ENCODE measurements at regions of chr6 and their contacts with region 1.

Region 1: GRCh38 chr6:38493931-38494547 is 145.7 kb downstream of the BTBD9 start:
- DNase-seq: peak; percentile 72
- H3K4me3 ChIP-seq: no peak overlapping the region
- H3K27ac ChIP-seq: no peak overlapping the region
- H3K4me1 ChIP-seq: no peaks in the 10 kb centered on the region
- H3K27me3 ChIP-seq: no peaks in the 10 kb centered on the region
- CTCF ChIP-seq: peak; percentile 87 to 97 (median 90)
- POLR2A ChIP-seq: no peak

Region 2: GRCh38 chr6:37705239-37706051 is 788.6 kb before region 1 on chr6:
- intact Hi-C with region 1: loop called (anchors 5 kb)
- DNase-seq: peak; percentile 60
- H3K4me3 ChIP-seq: peak overlapping the region; percentile 39 to 43
- H3K27ac ChIP-seq: peak overlapping the region; percentile 70
- H3K4me1 ChIP-seq: peaks cover 4% of the 10 kb centered on the region
- H3K27me3 ChIP-seq: no peaks in the 10 kb centered on the region
- CTCF ChIP-seq: peak; percentile 24 to 71 (median 65)
- POLR2A ChIP-seq: no peak

Region 3: DNA sequence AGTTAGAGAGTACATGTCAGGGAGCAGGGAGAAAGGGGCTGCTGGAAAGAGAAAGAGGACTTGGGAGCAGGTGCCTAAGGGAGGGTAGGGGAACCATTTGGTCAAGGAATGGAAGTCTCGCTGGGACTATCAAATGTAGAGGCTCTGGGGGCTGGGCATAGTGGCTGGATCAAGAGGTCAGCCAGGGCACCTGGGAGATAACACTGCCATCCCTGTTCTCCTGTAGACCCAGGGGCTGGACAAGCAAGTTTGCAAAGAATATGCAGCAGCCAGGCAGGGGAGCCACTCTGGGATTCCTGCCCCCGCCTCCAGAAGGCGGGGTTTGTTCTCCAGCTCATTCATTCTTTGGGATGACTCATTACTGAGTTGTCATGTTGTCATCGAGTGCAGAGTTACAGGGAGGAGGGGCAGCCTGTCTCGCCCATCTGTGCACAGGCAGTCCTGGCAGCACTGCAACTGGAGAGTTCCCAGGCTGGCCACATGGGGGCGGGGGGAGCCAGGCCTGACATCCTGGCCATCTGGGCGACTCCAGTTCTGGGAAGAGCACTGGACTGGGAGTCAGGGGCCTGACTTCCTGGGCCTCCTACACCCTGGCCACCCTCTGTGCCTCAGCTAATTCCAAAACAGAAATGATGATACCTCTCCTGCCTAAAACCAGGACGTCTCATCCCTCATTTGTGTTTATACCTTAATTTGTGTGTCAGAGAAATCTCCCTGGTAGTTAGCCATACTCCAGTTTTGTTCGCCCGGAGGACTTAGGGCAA is 702.7 kb before region 1 on chr6:
- intact Hi-C with region 1: loop called (anchors 5 kb)
- DNase-seq: peak; percentile 90
- H3K4me3 ChIP-seq: no peak overlapping the region
- H3K27ac ChIP-seq: no peak overlapping the region
- H3K4me1 ChIP-seq: no peaks in the 10 kb centered on the region
- H3K27me3 ChIP-seq: no peaks in the 10 kb centered on the region
- CTCF ChIP-seq: peak; percentile 76 to 96 (median 87)
- POLR2A ChIP-seq: no peak

Region 4: DNA sequence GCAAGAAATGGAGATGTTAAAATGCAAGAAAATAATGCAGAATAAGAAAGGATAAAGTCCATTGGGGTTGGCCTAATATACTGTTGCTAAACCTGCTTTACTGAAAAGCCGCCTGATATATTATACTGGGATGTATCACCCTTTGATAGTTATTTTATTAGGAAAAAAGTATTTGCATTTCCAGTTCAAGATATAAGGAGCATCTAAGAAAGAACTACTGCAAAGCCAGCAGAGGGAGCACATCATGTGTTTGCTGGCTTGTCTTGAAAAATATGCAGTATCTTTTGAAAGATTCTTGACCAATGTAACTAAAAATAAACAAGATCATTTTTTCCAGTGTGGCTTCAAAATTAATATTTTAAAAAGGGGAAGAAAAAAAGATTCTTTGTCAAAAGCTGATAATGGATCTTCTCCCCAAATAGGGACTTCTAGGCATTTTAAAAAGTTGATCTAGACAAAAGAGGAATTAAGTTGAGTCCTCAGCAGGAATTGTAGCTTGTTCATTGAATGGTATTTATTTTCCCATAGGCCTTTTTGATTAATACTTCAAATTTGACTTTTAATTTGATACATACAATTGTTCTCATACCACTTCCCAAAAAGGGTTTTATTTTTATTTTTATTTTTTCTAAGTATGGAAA is 459.6 kb before region 1 on chr6:
- intact Hi-C with region 1: loop called (anchors 5 kb)
- DNase-seq: no peak
- H3K4me3 ChIP-seq: no peak overlapping the region
- H3K27ac ChIP-seq: no peak overlapping the region
- H3K4me1 ChIP-seq: no peaks in the 10 kb centered on the region
- H3K27me3 ChIP-seq: no peaks in the 10 kb centered on the region
- CTCF ChIP-seq: peak; percentile 11 to 62 (median 44)
- POLR2A ChIP-seq: no peak

Region 5: DNA sequence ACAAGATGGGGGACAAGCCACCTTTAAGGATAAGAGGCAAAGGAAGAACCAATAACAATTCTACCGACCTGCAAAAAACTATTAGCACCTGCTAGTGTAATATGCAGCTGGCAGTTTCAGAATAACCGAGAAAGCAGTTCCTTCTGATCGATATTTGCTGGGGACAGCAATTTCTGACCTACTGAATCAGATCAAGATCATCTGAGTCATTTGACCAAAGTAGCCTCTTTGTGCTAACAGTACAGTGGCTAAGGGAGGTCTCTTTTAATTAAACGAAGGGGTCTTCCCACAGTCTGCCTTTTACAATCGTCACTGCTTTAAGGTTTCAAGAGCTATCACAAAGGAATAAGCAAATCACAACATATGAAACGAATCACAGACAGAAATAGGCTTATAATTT is 173.2 kb before region 1 on chr6:
- intact Hi-C with region 1: no loop called
- DNase-seq: no peak
- H3K4me3 ChIP-seq: no peak overlapping the region
- H3K27ac ChIP-seq: no peak overlapping the region
- H3K4me1 ChIP-seq: no peaks in the 10 kb centered on the region
- H3K27me3 ChIP-seq: no peaks in the 10 kb centered on the region
- CTCF ChIP-seq: no peak
- POLR2A ChIP-seq: no peak

Region 6: GRCh38 chr6:38720295-38720694 is 226.3 kb after region 1 on chr6:
- intact Hi-C with region 1: no loop called
- DNase-seq: no peak
- H3K4me3 ChIP-seq: no peak overlapping the region
- H3K27ac ChIP-seq: no peak overlapping the region
- H3K4me1 ChIP-seq: no peaks in the 10 kb centered on the region
- H3K27me3 ChIP-seq: no peaks in the 10 kb centered on the region
- CTCF ChIP-seq: peak in 1 of 4 experiments; percentile 7
- POLR2A ChIP-seq: no peak

Measured in prostate gland (tissue), 2 donors.